IMR-90 (cell line): ENCODE measurements at regions of chr5 and their contacts with region 1.

Region 1: GRCh38 chr5:80255732-80256479 is at the start of gene SERINC5:
- DNase-seq: peak; percentile 68
- ATAC-seq: peak; percentile 91
- H3K4me3 ChIP-seq: peak within 1 kb of the TSS; percentile 73
- H3K27ac ChIP-seq: peak within 1 kb of the TSS; percentile 85
- H3K4me1 ChIP-seq: peaks cover 3% of the 10 kb centered on the region
- H3K27me3 ChIP-seq: no peaks in the 10 kb centered on the region
- CTCF ChIP-seq: no peak
- POLR2A ChIP-seq: peak; percentile 88
- RAD21 ChIP-seq: no peak
- total RNA-seq, gene SERINC5: 7.2 and 8.1 TPM in 2 replicates

Region 2: GRCh38 chr5:80268916-80269315 is 13.0 kb after region 1 on chr5:
- CTCF ChIA-PET with region 1: no interaction called
- POLR2A ChIA-PET with region 1: interaction called, 12 read pairs
- dilution Hi-C with region 1: no loop called
- in situ Hi-C with region 1: no loop called
- intact Hi-C with region 1: loop called (anchors 2 kb)
- DNase-seq: peak; percentile 8
- ATAC-seq: no peak
- H3K4me3 ChIP-seq: no peak overlapping the region
- H3K27ac ChIP-seq: no peak overlapping the region
- H3K4me1 ChIP-seq: no peaks in the 10 kb centered on the region
- H3K27me3 ChIP-seq: no peaks in the 10 kb centered on the region; the same call in 1 of the 2 replicates
- CTCF ChIP-seq: no peak
- POLR2A ChIP-seq: no peak
- RAD21 ChIP-seq: no peak

Region 3: GRCh38 chr5:80275347-80275746 is 19.4 kb after region 1 on chr5:
- CTCF ChIA-PET with region 1: no interaction called
- POLR2A ChIA-PET with region 1: no interaction called
- dilution Hi-C with region 1: no loop called
- in situ Hi-C with region 1: no loop called
- intact Hi-C with region 1: loop called (anchors 2 kb)
- DNase-seq: peak; percentile 21
- ATAC-seq: no peak
- H3K4me3 ChIP-seq: no peak overlapping the region
- H3K27ac ChIP-seq: no peak overlapping the region
- H3K4me1 ChIP-seq: no peaks in the 10 kb centered on the region
- H3K27me3 ChIP-seq: no peaks in the 10 kb centered on the region; the same call in 1 of the 2 replicates
- CTCF ChIP-seq: peak; percentile 43
- POLR2A ChIP-seq: no peak
- RAD21 ChIP-seq: peak; percentile 61